ENCODE measurements at regions of chr20 and their contacts with region 1.

Region 1: GRCh38 chr20:3820048-3820900 is at the start of gene AP5S1:
- DNase-seq: peak; percentile 91
- H3K4me3 Mint-ChIP-seq: peak within 1 kb of the TSS; percentile 89
- H3K27ac Mint-ChIP-seq: peak within 1 kb of the TSS; percentile 94
- H3K4me1 Mint-ChIP-seq: peaks cover 32% of the 10 kb centered on the region
- H3K27me3 Mint-ChIP-seq: no peaks in the 10 kb centered on the region
- total RNA-seq, gene AP5S1: 11.9 and 12.8 TPM in 2 replicates

Region 2: DNA sequence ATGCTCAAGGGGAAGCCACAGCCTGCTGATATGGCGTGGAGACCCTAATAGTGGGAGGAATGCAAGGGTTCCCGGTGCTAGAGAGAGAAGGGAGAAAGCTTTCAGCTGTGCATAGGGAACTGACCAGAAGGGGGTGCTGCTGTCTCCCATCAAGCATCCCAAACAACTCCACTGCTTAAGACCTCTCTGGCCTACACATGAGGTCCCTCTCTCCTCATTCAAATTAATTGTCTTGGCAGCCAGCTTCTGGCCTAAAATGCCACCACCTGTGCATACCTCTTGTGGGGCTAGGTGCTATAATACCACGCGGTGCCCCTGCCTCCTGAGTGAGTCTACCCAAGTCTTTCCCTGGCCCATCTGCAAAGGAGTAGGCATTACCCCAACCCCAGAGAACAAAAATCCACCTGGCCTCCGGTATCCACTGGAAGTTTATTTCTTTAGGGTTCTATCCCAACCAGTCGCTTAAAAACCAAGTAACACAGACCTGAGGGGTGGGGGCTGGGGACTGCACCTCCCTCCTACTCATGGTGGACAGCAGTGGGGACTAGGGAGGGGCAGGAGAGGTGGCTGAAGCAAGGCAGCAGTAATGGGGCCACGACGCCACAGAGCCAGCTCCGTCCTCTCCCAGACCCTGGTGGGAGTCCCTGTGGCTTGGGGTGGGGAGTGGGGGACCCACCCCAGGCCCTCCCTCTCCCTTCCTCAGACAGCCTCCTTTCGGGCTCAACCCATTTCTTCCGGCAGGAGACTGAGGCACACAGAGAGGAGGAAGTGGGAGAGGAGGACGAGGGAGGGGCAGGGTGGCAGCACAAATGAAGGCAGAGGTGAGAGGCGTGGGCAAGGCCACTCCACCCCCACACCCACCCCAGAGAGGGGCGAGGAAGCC is 66.9 kb before region 1 on chr20:
- intact Hi-C with region 1: no loop called
- DNase-seq: peak; percentile 51
- H3K4me3 Mint-ChIP-seq: no peak overlapping the region
- H3K27ac Mint-ChIP-seq: no peak overlapping the region
- H3K4me1 Mint-ChIP-seq: peaks cover 6% of the 10 kb centered on the region
- H3K27me3 Mint-ChIP-seq: no peaks in the 10 kb centered on the region

Region 3: DNA sequence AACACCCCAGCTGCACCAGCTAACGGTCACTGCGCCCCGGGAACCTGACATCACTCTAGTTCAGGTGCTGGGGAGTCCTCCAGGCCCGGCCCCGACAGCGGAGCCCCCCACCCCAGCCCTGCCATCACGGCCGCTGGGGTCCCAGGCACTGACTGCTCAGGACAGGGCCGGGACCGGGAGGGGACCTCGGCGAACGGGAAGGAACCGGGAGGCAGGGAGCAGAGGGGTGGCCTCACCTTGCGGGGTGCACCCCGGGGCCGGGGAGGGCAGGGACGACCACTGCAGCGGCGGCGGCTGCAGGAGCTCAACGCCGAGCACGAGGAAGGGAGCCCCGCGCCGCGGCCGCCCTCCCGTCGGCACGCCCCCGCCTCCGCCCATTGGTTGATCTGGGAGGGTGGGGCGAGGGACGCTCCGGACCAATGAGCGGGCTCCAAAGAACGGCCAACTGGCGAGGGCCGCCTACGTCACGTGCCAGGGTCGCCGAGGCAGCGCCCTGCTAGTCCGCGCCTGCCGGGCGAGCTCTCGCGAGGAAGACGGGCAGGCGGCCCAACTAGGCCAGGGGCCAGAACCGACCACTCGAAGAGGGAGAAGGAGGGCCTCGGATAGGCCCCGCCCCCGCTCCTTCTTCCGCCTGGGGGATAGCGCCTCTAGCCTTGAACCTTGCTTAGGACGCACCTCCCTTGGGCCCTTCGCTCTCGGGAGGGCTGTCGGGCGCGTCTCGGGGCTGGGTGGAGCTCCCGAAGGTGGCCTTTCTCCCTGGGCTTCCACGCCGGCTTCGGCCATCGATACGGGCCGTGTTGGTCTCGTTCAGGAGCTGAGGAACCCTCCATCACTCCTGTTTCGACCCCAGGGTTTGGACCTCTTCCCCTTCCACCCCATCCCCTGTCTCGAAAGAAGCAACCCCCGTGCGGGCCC is 52.6 kb before region 1 on chr20 and contains the start of gene ADISSP:
- intact Hi-C with region 1: loop called (anchors 1 kb)
- DNase-seq: peak; percentile 97
- H3K4me3 Mint-ChIP-seq: peak within 1 kb of the TSS; percentile 86
- H3K27ac Mint-ChIP-seq: peak within 1 kb of the TSS; percentile 94
- H3K4me1 Mint-ChIP-seq: peaks cover 21% of the 10 kb centered on the region
- H3K27me3 Mint-ChIP-seq: peaks cover 3% of the 10 kb centered on the region
- total RNA-seq, gene ADISSP: 55.8 and 56.3 TPM in 2 replicates

Region 4: GRCh38 chr20:3786665-3787323 is 33.5 kb before region 1 on chr20 and contains the start of gene CENPB:
- intact Hi-C with region 1: loop called (anchors 1 kb)
- DNase-seq: peak; percentile 88
- H3K4me3 Mint-ChIP-seq: peak within 1 kb of the TSS; percentile 83
- H3K27ac Mint-ChIP-seq: peak within 1 kb of the TSS; percentile 8
- H3K4me1 Mint-ChIP-seq: peaks cover 32% of the 10 kb centered on the region
- H3K27me3 Mint-ChIP-seq: no peaks in the 10 kb centered on the region
- total RNA-seq, gene CENPB: 66.1 and 68.9 TPM in 2 replicates

Region 5: GRCh38 chr20:3795511-3796468 is 24.5 kb before region 1 on chr20 and contains the start of gene CDC25B:
- intact Hi-C with region 1: loop called (anchors 1 kb)
- DNase-seq: peak; percentile 85
- H3K4me3 Mint-ChIP-seq: peak within 1 kb of the TSS; percentile 99
- H3K27ac Mint-ChIP-seq: peak within 1 kb of the TSS; percentile 98
- H3K4me1 Mint-ChIP-seq: peaks cover 44% of the 10 kb centered on the region
- H3K27me3 Mint-ChIP-seq: no peaks in the 10 kb centered on the region
- total RNA-seq, gene CDC25B: 101 and 103 TPM in 2 replicates

Region 6: GRCh38 chr20:3846740-3847428 is 26.6 kb after region 1 on chr20 and contains the start of gene MAVS:
- intact Hi-C with region 1: loop called (anchors 1 kb)
- DNase-seq: peak; percentile 83
- H3K4me3 Mint-ChIP-seq: peak within 1 kb of the TSS; percentile 90
- H3K27ac Mint-ChIP-seq: peak within 1 kb of the TSS; percentile 79
- H3K4me1 Mint-ChIP-seq: peaks cover 17% of the 10 kb centered on the region
- H3K27me3 Mint-ChIP-seq: no peaks in the 10 kb centered on the region
- total RNA-seq, gene MAVS: 41.0 and 43.5 TPM in 2 replicates

Region 7: GRCh38 chr20:3888622-3889488 is 68.6 kb after region 1 on chr20 and contains the start of gene PANK2:
- intact Hi-C with region 1: loop called (anchors 1 kb)
- DNase-seq: peak; percentile 98
- H3K4me3 Mint-ChIP-seq: peak within 1 kb of the TSS; percentile 99
- H3K27ac Mint-ChIP-seq: peak within 1 kb of the TSS; percentile 93
- H3K4me1 Mint-ChIP-seq: peaks cover 37% of the 10 kb centered on the region
- H3K27me3 Mint-ChIP-seq: no peaks in the 10 kb centered on the region
- total RNA-seq, gene PANK2: 49.2 and 51.4 TPM in 2 replicates

Region 8: DNA sequence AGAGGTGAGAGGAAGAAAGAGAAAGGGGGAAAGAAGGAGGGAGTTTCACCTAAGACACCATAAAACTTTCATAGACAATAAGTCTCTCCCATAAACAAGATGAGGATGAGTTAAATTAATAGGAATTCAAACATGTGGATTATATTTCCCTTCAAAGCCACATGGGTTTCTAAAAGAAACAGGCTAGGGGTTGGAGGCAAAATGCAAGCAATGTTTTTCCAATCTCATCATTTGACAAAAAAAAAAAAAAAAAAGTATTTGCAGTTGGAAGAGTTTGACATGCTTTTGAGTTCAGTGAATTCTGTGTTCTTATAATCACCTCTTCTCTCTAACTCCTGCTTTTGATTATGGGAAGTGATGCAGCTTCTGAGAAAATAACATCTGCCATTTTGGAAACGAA is 615.0 kb after region 1 on chr20:
- intact Hi-C with region 1: no loop called
- DNase-seq: no peak
- H3K4me3 Mint-ChIP-seq: no peak overlapping the region
- H3K27ac Mint-ChIP-seq: no peak overlapping the region
- H3K4me1 Mint-ChIP-seq: no peaks in the 10 kb centered on the region
- H3K27me3 Mint-ChIP-seq: peaks cover 12% of the 10 kb centered on the region